Left cardiac atrium (tissue), 4 donors: ENCODE measurements at regions of chr6 and their contacts with region 1.

Region 1: GRCh38 chr6:149545754-149546528 is at the start of gene PPIL4:
- DNase-seq: peak; percentile 98
- ATAC-seq: peak; percentile 98 to 99
- total RNA-seq, gene PPIL4: 18.1 to 23.3 TPM

Region 2: GRCh38 chr6:149513915-149514314 is 32.0 kb before region 1 on chr6:
- intact Hi-C with region 1: no loop called
- DNase-seq: no peak
- ATAC-seq: peak; percentile 38 to 61

Region 3: GRCh38 chr6:149565527-149566409 is 19.8 kb after region 1 on chr6 and contains the start of gene GINM1:
- intact Hi-C with region 1: loop called in 1 of 2 experiments (anchors 1 kb)
- DNase-seq: peak; percentile 92
- ATAC-seq: peak; percentile 96 to 97
- total RNA-seq, gene GINM1: 46.0 to 59.4 TPM

Region 4: GRCh38 chr6:149862922-149863696 is 317.2 kb after region 1 on chr6:
- intact Hi-C with region 1: no loop called
- DNase-seq: peak; percentile 74
- ATAC-seq: peak; percentile 80

Region 5: GRCh38 chr6:150466196-150466595 is 920.3 kb after region 1 on chr6:
- intact Hi-C with region 1: no loop called
- DNase-seq: no peak
- ATAC-seq: no peak